ENCODE measurements at regions of chr7 and their contacts with region 1.

Region 1: DNA sequence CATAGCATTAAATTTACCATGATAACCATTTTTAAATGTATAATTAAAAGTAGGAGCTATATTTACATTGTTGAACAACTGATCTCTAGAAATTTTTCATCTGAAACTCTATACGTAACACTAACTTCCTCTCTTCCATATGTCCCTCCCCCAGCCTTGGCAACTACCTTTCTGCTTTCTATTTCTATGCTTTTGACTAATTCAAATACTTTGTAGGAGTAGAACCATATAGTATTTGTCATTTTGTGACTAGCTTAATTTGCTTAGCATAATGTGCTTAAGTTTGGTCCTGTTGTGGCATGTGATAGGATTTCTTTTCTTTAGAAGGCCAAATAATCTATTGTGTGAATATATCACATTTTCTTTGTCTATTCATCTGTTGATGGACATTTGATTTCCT is 225.3 kb upstream of the POT1 start:
- DNase-seq: no peak
- ATAC-seq: no peak
- H3K4me3 ChIP-seq: no peak overlapping the region
- H3K4me3 Mint-ChIP-seq: no peak overlapping the region
- H3K27ac ChIP-seq: no peak overlapping the region
- H3K27ac Mint-ChIP-seq: no peak overlapping the region
- H3K4me1 ChIP-seq: no peaks in the 10 kb centered on the region
- H3K4me1 Mint-ChIP-seq: no peaks in the 10 kb centered on the region
- H3K27me3 ChIP-seq: no peaks in the 10 kb centered on the region
- H3K27me3 Mint-ChIP-seq: no peaks in the 10 kb centered on the region

Region 2: DNA sequence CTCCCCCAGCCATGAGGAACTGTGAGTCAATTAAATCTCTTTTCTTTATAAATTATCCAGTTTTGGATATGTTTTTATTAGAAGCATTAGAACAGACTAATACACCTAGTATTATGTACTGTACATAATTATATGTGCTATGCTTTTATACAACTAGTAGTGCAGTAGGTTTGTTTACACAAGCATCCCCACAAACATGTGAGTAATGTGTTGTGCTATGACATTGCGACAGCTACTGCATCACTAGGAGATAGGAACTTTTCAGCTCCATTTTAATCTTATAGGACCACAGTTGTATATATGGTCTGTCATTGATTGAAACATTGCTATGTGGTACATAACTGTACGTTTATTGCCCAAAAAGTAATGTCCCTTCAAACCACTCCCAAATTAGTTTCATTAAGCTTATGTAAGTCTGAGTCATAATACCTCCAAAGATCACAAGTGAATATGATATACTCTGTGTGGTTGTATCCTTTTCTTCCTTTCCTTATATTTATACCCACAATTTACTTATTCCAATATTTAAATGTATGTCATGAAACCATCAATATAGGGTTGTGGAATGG is 42.1 kb before region 1 on chr7:
- CTCF ChIA-PET with region 1: no interaction called
- POLR2A ChIA-PET with region 1: no interaction called
- intact Hi-C with region 1: loop called in 1 of 2 experiments (anchors 5 kb)
- DNase-seq: no peak
- ATAC-seq: no peak
- H3K4me3 ChIP-seq: no peak overlapping the region
- H3K4me3 Mint-ChIP-seq: no peak overlapping the region
- H3K27ac ChIP-seq: no peak overlapping the region
- H3K27ac Mint-ChIP-seq: no peak overlapping the region
- H3K4me1 ChIP-seq: no peaks in the 10 kb centered on the region
- H3K4me1 Mint-ChIP-seq: no peaks in the 10 kb centered on the region
- H3K27me3 ChIP-seq: no peaks in the 10 kb centered on the region
- H3K27me3 Mint-ChIP-seq: no peaks in the 10 kb centered on the region

Region 3: GRCh38 chr7:125195156-125195555 is 40.2 kb after region 1 on chr7:
- CTCF ChIA-PET with region 1: no interaction called
- POLR2A ChIA-PET with region 1: no interaction called
- intact Hi-C with region 1: no loop called
- DNase-seq: no peak
- ATAC-seq: no peak
- H3K4me3 ChIP-seq: no peak overlapping the region
- H3K4me3 Mint-ChIP-seq: no peak overlapping the region
- H3K27ac ChIP-seq: no peak overlapping the region
- H3K27ac Mint-ChIP-seq: no peak overlapping the region
- H3K4me1 ChIP-seq: no peaks in the 10 kb centered on the region
- H3K4me1 Mint-ChIP-seq: no peaks in the 10 kb centered on the region
- H3K27me3 ChIP-seq: no peaks in the 10 kb centered on the region
- H3K27me3 Mint-ChIP-seq: no peaks in the 10 kb centered on the region

Measured in naive thymus-derived CD4-positive, alpha-beta T cell (primary cell).